ENCODE measurements at regions of chr12 and their contacts with region 1.

Region 1: DNA sequence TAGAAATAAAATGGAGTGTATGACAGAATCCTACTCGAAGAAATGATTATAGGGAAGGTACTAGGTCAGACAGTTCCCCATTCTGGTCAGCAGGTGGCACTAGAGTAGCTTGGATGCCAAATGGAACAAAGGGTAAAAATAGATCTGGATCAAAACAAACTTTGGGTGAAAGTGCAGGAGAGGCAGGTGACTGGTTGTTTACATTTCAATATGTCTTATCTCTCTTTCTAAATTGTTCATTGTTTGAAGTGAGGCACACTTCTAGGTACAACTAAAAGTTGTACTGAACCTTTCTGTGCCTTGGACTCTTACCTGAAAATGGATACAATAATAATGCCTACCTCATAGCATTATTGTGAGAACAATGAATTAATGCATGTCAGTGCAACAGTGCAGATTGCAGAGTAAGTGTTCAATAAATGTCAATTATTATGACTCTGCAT is 62.0 kb upstream of the OSBPL8 start:
- DNase-seq: peak; percentile 83 to 91
- H3K4me3 ChIP-seq: no peak overlapping the region
- H3K27ac ChIP-seq: no peak overlapping the region
- H3K4me1 ChIP-seq: peaks cover 0 to 11% (median 6%) of the 10 kb centered on the region in 4 donors
- H3K27me3 ChIP-seq: no peaks in the 10 kb centered on the region
- CTCF ChIP-seq: peak in 5 of 7 experiments; percentile 90 to 99 (median 96)
- EP300 ChIP-seq: no peak
- POLR2A ChIP-seq: no peak

Region 2: GRCh38 chr12:76784600-76785051 is 163.0 kb after region 1 on chr12:
- intact Hi-C with region 1: loop called (anchors 10 kb)
- DNase-seq: peak in 1 of 2 donors; percentile 77
- H3K4me3 ChIP-seq: no peak overlapping the region
- H3K27ac ChIP-seq: peak overlapping the region in 2 of 5 donors; percentile 9 to 39
- H3K4me1 ChIP-seq: peaks cover 6 to 56% (median 30%) of the 10 kb centered on the region in 4 donors
- H3K27me3 ChIP-seq: no peaks in the 10 kb centered on the region
- CTCF ChIP-seq: no peak
- EP300 ChIP-seq: no peak
- POLR2A ChIP-seq: no peak

Region 3: DNA sequence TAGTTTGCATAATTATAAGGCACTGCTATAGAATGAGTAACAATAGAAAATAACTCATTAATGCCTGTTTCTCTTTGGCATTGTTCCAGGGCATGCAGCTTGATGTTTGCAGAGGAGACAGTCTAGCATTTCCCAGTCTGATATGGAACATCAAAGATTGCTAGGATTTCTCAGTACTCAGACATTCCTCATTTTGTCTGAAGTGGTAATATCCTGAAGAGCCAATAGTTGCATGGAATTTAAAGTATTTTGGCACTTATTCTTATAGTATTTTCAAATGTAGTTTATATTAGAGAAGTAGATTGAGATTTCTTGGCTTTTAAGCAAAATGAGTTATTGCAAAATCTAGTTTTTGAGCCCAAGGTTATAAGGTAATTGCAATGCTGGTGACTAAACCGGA is 781.1 kb after region 1 on chr12:
- intact Hi-C with region 1: no loop called
- DNase-seq: peak in 1 of 2 donors; percentile 22
- H3K4me3 ChIP-seq: no peak overlapping the region
- H3K27ac ChIP-seq: no peak overlapping the region
- H3K4me1 ChIP-seq: no peaks in the 10 kb centered on the region
- H3K27me3 ChIP-seq: no peaks in the 10 kb centered on the region
- CTCF ChIP-seq: no peak
- EP300 ChIP-seq: no peak
- POLR2A ChIP-seq: no peak